AG04449 (cell line): ENCODE measurements at regions of chr2 and their contacts with region 1.

Region 1: DNA sequence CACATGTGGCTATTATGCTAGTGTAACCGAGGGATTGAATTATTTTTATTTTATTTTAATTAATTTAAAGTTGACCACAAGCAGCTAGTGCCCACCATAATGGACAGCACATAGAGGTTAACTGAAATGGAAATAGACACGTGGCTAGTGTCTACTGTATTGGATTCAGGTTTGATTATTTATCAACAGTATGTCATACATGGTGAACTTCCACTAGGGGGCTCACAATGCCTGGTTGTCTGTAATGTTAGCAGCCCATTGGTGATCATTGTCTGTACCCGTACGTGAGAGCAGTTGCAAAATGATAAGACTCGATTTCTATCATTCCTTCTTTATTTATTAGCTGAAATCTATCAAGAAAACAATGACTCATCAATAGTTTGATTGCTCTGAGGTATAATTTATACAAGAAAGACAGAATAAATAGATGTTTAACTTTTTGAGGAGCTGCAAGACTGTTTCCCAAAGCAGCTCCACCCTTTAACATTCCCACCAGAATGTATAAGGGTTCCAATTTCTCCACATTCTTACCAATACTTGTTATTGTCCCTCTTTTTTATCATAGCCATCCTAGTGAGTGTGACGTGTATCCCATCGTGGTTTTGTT is 76.5 kb downstream of the CYBRD1 start:
- DNase-seq: no peak
- H3K4me3 ChIP-seq: no peak overlapping the region
- CTCF ChIP-seq: peak; percentile 79

Region 2: DNA sequence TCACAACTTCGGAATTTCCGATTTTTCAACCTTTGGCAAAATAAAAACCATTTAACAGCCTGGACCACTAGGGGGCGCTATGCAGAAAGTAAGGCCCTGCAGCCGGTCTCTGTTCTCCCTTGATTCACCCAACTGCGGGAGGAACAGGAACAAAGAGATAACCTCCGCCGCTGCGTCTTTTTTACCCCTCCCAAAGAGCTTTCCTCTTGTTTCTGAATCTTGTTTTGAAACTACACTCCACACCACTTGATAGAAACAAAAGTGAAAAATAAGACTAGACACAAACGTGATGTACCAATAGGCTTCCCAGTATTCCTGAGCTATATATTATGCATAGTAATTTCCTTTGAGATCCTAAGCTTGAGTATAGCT is 1189.7 kb before region 1 on chr2:
- CTCF ChIA-PET with region 1: no interaction called
- POLR2A ChIA-PET with region 1: no interaction called
- DNase-seq: no peak
- H3K4me3 ChIP-seq: no peak overlapping the region
- CTCF ChIP-seq: peak; percentile 65

Region 3: DNA sequence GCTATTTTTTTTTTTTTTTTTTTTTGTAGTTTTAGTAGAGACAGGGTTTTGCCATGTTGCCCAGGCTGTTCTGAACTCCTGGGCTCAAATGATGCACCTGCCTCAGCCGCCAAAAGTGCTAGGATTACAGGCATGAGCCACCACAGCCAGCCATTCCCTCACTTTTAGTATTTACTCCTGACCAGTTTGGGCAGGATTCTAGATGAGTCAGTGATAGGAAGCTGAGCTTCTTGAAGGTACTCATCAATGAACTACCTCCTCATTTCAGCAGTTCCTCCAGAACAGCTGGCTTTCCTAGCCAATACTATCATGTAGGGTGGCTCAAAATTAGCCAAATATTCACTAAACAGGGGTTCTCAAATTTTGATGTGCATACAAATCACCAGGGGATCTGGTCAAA is 19.3 kb before region 1 on chr2:
- CTCF ChIA-PET with region 1: interaction called, 18 read pairs
- POLR2A ChIA-PET with region 1: no interaction called
- DNase-seq: no peak
- H3K4me3 ChIP-seq: no peak overlapping the region
- CTCF ChIP-seq: no peak

Region 4: DNA sequence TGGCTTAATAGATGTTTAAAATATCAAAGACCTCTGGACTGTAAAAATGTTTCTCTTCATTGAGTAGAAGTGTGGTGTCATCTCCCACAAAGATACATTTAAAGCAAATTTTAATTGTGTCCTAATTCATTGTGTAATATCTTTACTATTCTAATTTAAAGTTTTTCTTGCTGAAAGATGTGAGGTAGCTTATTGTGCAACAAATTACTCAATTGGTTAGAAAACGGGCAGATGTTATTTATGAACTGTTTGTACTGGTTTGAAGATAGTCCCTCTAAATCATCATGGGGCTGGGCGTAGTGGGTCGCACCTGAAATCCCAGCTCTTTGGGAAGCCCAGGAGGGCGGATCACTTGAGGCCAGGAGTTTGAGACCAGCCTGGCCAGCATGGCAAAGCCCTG is 11.2 kb before region 1 on chr2:
- CTCF ChIA-PET with region 1: interaction called, 53 read pairs
- POLR2A ChIA-PET with region 1: no interaction called
- DNase-seq: no peak
- H3K4me3 ChIP-seq: no peak overlapping the region
- CTCF ChIP-seq: no peak

Region 5: DNA sequence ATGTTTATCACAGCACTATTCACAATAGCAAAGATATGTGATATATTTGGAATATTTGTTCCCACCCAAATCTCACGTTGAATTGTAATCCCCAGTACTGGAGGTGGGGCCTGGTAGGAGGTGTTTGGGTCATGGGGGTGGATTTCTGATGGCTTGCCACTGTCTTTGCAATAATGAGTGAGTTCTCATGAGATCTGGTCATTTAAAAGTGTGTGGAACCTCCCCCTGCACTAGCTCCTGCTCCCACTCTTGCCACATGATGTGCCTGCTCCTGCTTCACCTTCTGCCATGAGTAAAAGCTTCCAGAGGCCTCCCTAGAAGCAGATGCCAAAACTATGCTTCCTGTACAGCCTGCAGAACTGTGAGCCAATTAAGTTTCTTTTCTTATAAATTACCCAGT is 16.3 kb after region 1 on chr2:
- CTCF ChIA-PET with region 1: interaction called, 116 read pairs
- POLR2A ChIA-PET with region 1: no interaction called
- DNase-seq: no peak
- H3K4me3 ChIP-seq: no peak overlapping the region
- CTCF ChIP-seq: no peak